ENCODE measurements at regions of chr17 and their contacts with region 1.

Region 1: GRCh38 chr17:7818746-7819645 is 15.0 kb upstream of the KDM6B start:
- DNase-seq: no peak
- H3K4me3 ChIP-seq: no peak overlapping the region
- H3K27ac ChIP-seq: no peak overlapping the region
- H3K4me1 ChIP-seq: no peaks in the 10 kb centered on the region
- CTCF ChIP-seq: no peak

Region 2: GRCh38 chr17:7745748-7746470 is 73.1 kb before region 1 on chr17:
- CTCF ChIA-PET with region 1: no interaction called
- POLR2A ChIA-PET with region 1: no interaction called
- intact Hi-C with region 1: loop called (anchors 10 kb)
- DNase-seq: no peak
- H3K4me3 ChIP-seq: no peak overlapping the region
- H3K27ac ChIP-seq: no peak overlapping the region
- H3K4me1 ChIP-seq: no peaks in the 10 kb centered on the region
- CTCF ChIP-seq: 0 out of 2 replicates have a peak, but pooled peaks have one; percentile 27

Region 3: DNA sequence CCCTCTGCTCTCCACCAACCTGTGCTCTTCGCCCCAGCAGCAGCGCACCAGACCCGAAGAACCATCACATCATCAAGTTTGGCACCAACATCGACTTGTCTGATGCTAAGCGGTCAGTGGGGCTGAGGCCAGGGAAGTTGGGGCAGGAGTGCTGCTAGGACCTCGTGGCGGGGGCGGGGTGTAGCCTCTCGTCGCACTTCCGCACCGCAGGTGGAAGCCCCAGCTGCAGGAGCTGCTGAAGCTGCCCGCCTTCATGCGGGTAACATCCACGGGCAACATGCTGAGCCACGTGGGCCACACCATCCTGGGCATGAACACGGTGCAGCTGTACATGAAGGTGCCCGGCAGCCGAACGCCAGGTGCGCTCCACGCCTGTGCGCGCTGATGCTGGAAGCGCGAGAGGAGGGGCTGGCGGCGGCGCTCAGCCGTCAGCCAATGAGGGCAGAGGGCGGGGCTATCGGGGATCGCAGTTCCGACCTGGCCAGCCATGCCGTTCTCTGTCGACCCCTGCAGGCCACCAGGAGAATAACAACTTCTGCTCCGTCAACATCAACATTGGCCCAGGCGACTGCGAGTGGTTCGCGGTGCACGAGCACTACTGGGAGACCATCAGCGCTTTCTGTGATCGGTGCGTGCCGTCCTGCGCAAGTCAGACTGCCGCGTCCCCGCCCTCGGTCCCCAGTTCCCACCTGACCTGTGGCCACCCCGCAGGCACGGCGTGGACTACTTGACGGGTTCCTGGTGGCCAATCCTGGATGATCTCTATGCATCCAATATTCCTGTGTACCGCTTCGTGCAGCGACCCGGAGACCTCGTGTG is 32.7 kb after region 1 on chr17:
- CTCF ChIA-PET with region 1: no interaction called
- POLR2A ChIA-PET with region 1: no interaction called
- intact Hi-C with region 1: loop called (anchors 1 kb)
- DNase-seq: peak; percentile 95
- H3K4me3 ChIP-seq: peak overlapping the region; percentile 67
- H3K27ac ChIP-seq: peak overlapping the region; percentile 42
- H3K4me1 ChIP-seq: peaks cover 31% of the 10 kb centered on the region
- CTCF ChIP-seq: peak; percentile 88

Region 4: DNA sequence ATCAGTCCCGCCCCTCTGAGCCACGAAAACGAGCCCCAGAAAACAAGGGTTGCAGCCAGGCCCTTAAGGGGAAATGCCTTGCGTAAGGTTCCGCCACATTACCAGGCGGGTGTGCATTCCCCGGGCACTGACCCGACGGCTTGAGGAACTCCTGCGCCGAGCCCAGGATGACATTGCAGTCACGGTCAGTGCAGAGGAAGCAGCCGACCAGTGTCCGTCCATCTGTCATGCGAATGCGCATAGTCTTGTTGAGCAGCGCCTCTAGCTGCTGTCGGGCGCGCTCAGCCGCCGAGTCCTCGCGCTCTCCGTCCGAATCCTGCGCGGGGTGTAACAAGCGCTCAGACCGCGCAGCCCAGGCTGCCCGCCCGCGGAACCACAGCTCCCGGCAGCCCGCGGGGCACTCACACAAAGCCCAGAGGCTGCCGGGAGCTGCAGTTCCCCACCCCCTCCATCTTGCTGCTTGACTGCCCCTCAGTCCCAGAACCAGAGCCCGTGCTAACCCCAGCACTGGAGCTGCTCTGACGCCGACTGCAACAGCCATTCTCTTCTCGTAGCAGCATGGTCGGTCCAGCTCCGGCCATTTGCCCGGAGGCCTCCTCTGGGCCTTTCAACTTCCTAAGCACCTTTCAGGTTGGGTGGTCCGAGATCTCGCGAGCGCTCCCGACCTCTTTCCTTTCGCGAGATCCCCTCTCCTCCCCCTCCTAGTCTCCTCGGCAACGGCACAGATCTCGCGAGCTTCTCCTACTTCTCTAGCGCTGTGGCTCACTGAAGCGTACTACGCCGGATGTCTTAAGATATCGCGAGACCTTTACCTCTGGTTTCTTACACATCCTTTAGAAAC is 38.1 kb after region 1 on chr17 and contains the start of gene NAA38:
- CTCF ChIA-PET with region 1: no interaction called
- POLR2A ChIA-PET with region 1: no interaction called
- intact Hi-C with region 1: loop called (anchors 1 kb)
- DNase-seq: peak; percentile 100
- H3K4me3 ChIP-seq: peak within 1 kb of the TSS; percentile 86
- H3K27ac ChIP-seq: peak within 1 kb of the TSS; percentile 86
- H3K4me1 ChIP-seq: peaks cover 46% of the 10 kb centered on the region
- CTCF ChIP-seq: peak; percentile 68
- total RNA-seq, gene NAA38: 168 and 205 TPM in 2 replicates

Measured in OCI-LY7 (cell line).